ENCODE measurements at regions of chr18 and their contacts with region 1.

Region 1: DNA sequence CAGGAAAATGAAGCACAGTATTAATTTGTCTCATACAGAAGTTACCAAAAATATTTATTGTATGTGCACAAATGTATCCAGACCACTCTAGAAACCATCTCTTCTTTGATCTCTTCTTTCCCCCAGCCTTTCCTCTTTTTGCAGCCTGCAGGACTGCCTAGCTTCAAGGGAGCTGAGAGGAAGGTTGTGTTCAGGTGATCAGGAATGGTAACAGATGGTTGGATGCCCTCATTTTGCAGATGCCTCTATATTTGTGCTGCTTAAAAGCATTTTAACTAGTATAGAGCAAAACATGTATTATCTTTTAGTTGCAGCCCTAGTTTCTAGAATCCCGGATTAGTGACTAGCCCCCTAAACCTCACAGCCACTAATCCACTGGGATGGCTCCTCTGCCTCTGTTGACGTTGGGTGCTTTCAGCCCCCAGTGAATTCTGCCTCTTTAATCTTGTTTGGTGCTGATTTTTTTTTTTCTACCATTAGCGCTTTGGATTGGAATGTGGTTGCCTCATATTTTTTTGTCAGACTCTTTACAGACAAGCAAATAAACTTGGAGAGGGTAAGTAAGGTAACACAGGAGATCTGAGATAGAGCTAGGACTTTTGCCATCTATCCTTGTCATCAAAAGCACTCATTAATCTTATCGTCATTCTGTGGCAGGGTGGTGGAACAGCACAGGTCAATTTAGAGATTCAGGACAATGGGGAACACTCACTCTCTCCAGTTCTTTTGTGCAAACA is 103.8 kb upstream of the NDUFV2 start:
- DNase-seq: peak; percentile 55
- ATAC-seq: peak; percentile 61
- H3K4me3 ChIP-seq: no peak overlapping the region
- H3K27ac ChIP-seq: peak overlapping the region; percentile 33; the same call in 1 of the 2 replicates
- H3K4me1 ChIP-seq: peaks cover 19% of the 10 kb centered on the region
- H3K27me3 ChIP-seq: no peaks in the 10 kb centered on the region
- CTCF ChIP-seq: no peak
- POLR2A ChIP-seq: no peak
- RAD21 ChIP-seq: no peak

Region 2: DNA sequence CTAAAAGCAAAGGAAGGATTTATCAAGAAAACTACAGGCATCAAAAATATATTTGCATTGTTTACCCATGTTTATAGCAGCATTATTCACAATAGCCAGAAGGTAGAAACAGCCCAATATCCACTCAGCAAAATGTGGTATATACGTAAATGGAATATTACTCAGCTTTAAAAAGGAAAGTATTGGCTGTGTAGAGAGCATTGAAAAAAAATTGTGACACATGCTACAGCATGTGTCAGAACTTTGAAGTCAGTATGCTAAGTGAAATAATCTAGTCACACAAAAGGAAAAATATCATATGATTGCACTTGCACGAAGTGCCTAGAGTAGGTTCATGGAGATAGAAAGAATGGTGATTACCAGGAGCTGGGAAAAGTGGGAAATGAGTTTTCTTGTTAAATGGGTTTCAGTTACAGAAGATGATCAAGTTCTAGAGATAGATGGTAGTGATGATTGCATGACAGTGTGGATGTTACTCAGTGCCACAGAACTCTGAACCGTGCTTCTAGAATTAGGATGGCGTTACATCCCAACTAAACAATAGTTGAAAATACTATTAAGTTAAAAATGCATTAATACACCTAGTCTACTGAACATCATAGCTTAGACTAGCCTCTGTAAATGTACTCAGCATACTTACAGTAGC is 158.1 kb after region 1 on chr18:
- CTCF ChIA-PET with region 1: no interaction called
- POLR2A ChIA-PET with region 1: no interaction called
- dilution Hi-C with region 1: no loop called
- in situ Hi-C with region 1: no loop called
- intact Hi-C with region 1: no loop called
- DNase-seq: no peak
- ATAC-seq: no peak
- H3K4me3 ChIP-seq: no peak overlapping the region
- H3K27ac ChIP-seq: no peak overlapping the region
- H3K4me1 ChIP-seq: no peaks in the 10 kb centered on the region
- H3K27me3 ChIP-seq: no peaks in the 10 kb centered on the region
- CTCF ChIP-seq: no peak
- POLR2A ChIP-seq: no peak
- RAD21 ChIP-seq: no peak

Region 3: DNA sequence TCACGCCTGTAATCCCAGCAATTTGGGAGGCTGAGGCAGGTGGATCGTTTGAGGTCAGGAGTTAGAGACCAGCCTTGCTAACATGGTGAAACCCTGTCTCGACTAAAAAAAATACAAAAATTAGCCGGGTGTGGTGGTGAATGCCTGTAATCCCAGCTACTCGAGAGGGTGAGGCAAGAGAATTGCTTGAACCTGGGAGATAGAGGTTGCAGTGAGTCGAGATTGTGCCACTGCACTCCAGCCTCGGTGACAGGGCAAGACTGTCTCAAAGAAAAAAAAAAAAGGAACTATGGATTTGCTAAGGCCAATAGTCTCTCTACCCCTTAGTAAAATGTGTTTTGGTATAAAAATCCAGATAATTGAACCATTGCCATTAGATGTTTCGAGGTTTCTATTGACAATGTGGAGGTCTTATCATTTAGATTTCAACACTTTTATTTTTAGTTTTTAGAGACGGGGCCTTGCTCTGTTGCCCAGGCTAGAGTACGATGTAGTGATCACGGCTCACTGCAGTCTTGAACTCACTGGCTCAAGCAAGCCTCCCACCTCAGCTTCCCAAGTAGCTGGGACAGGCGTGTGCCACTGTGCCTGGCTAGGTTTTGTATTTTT is 886.0 kb after region 1 on chr18:
- CTCF ChIA-PET with region 1: no interaction called
- POLR2A ChIA-PET with region 1: no interaction called
- dilution Hi-C with region 1: no loop called
- in situ Hi-C with region 1: no loop called
- intact Hi-C with region 1: loop called (anchors 5 kb)
- DNase-seq: no peak
- ATAC-seq: no peak
- H3K4me3 ChIP-seq: no peak overlapping the region
- H3K27ac ChIP-seq: no peak overlapping the region
- H3K4me1 ChIP-seq: peaks cover 1% of the 10 kb centered on the region; the same call in 1 of the 2 replicates
- H3K27me3 ChIP-seq: no peaks in the 10 kb centered on the region
- CTCF ChIP-seq: no peak
- POLR2A ChIP-seq: no peak
- RAD21 ChIP-seq: no peak

Measured in IMR-90 (cell line).